Calu3 (cell line): ENCODE measurements at regions of chr4 and their contacts with region 1.

Region 1: GRCh38 chr4:152398060-152398459 is 137.8 kb downstream of the FBXW7 start:
- DNase-seq: no peak
- H3K4me3 Mint-ChIP-seq: no peak overlapping the region
- H3K27ac Mint-ChIP-seq: no peak overlapping the region
- H3K4me1 Mint-ChIP-seq: peaks cover 10% of the 10 kb centered on the region
- H3K27me3 Mint-ChIP-seq: no peaks in the 10 kb centered on the region
- CTCF ChIP-seq: peak; percentile 32

Region 2: DNA sequence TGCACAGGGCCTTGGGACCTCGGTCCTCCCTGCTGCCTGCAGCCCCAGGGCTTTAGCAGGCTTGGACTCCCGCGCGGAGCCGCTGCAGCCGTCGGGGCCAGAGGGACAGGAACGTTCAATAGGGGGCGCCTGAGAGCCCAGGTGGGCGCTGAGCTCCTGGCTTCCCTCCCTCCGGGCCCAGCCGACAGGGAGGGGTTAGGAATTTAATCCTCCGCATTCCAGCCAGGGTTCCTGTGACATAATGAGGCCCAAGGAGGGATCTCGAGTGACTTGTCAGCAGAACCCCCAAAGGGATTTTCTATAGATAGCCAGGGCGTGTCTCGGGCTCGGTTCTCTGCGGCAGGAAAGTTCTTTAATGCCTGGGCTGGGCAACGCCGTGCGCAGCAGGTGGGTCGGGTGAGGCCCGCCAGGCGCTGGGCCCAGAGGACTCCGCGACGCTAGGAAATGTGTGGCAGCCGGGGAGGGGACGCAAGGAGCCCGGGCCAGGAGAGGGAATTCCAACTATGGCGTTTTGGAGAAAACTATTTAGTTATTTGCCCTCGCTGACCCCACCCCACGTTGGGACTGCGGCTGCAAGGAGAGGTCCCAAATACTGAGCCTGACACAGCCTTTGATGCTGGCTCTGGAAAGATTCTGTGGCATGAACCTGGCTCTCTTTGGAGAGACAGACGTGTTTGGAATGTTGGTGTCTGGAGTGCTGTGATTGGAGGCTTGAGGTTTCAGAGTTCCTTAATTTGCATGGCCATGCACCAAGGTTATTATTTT is 352.1 kb before region 1 on chr4:
- CTCF ChIA-PET with region 1: no interaction called
- intact Hi-C with region 1: loop called (anchors 10 kb)
- DNase-seq: peak; percentile 78
- H3K4me3 Mint-ChIP-seq: peak overlapping the region; percentile 30
- H3K27ac Mint-ChIP-seq: no peak overlapping the region
- H3K4me1 Mint-ChIP-seq: no peaks in the 10 kb centered on the region
- H3K27me3 Mint-ChIP-seq: peaks cover 30% of the 10 kb centered on the region
- CTCF ChIP-seq: peak; percentile 55